ENCODE measurements at regions of chr4 and their contacts with region 1.

Region 1: DNA sequence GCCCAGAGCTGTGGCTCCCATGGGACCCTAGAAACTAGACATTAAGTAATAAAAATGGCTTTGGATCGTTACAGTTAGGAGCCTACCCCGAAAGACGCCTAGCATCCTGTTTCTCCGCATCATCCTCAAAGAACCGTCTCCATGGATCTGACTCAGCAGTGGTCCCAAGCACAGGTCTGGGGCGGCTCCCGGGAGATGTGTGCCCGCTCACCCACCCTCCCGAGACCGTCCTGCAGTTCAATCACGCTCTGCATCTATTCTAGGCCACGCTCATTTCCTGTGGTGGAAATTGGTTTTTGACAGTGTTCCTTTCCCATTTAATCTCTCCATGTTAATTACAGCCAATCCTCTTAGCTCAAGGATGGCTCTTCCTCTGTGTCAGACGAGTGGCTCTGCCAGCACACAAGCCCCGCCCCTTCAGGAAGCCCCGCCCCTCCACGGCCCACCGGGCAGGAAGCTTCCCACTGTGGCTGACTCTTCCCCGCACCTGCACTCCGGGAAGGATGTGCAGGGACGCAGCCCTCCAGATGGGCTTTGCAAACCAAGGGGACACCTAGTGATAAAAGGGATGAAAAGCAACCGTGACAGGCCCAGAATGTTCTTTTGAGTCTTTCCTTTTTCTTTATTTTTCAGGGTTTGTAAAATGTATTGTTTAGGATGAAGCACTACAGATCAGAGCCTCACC is 34.5 kb upstream of the HELT start:
- DNase-seq: peak; percentile 53 to 79
- ATAC-seq: peak; percentile 70 to 93 (median 86)
- H3K4me3 ChIP-seq: no peak overlapping the region
- H3K27ac ChIP-seq: no peak overlapping the region
- H3K4me1 ChIP-seq: peaks cover under 1% of the 10 kb centered on the region
- H3K27me3 ChIP-seq: no peaks in the 10 kb centered on the region
- CTCF ChIP-seq: peak; percentile 51

Region 2: GRCh38 chr4:184583738-184584502 is 399.9 kb before region 1 on chr4:
- intact Hi-C with region 1: no loop called
- DNase-seq: no peak
- ATAC-seq: no peak
- H3K4me3 ChIP-seq: no peak overlapping the region
- H3K27ac ChIP-seq: no peak overlapping the region
- H3K4me1 ChIP-seq: no peaks in the 10 kb centered on the region
- H3K27me3 ChIP-seq: no peaks in the 10 kb centered on the region
- CTCF ChIP-seq: no peak

Region 3: GRCh38 chr4:184815046-184815877 is 168.6 kb before region 1 on chr4:
- intact Hi-C with region 1: loop called in 1 of 2 experiments (anchors 5 kb)
- DNase-seq: peak; percentile 77 to 86
- ATAC-seq: peak; percentile 44 to 67 (median 51)
- H3K4me3 ChIP-seq: peak overlapping the region; percentile 47
- H3K27ac ChIP-seq: peak overlapping the region; percentile 92
- H3K4me1 ChIP-seq: peaks cover 70% of the 10 kb centered on the region
- H3K27me3 ChIP-seq: no peaks in the 10 kb centered on the region
- CTCF ChIP-seq: no peak

Region 4: GRCh38 chr4:184838249-184839074 is 145.4 kb before region 1 on chr4:
- intact Hi-C with region 1: loop called in 1 of 2 experiments (anchors 10 kb)
- DNase-seq: no peak
- ATAC-seq: no peak
- H3K4me3 ChIP-seq: no peak overlapping the region
- H3K27ac ChIP-seq: no peak overlapping the region
- H3K4me1 ChIP-seq: no peaks in the 10 kb centered on the region
- H3K27me3 ChIP-seq: no peaks in the 10 kb centered on the region
- CTCF ChIP-seq: no peak

Region 5: DNA sequence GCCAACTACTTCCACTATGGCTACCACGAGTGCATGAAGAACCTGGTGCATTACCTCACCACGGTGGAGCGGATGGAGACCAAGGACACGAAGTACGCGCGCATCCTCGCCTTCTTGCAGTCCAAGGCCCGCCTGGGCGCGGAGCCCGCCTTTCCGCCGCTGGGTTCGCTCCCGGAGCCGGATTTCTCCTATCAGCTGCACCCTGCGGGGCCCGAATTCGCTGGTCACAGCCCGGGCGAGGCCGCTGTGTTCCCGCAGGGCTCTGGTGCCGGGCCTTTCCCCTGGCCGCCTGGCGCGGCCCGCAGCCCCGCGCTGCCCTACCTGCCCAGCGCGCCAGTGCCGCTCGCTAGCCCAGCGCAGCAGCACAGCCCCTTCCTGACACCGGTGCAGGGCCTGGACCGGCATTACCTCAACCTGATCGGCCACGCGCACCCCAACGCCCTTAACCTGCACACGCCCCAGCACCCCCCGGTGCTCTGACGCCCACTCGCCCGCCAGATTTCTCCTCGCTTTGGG is 36.5 kb after region 1 on chr4:
- intact Hi-C with region 1: no loop called
- DNase-seq: no peak
- ATAC-seq: peak; percentile 29 to 68 (median 48)
- H3K4me3 ChIP-seq: peak overlapping the region; percentile 51
- H3K27ac ChIP-seq: no peak overlapping the region
- H3K4me1 ChIP-seq: peaks cover 36% of the 10 kb centered on the region
- H3K27me3 ChIP-seq: peaks cover 3 to 97% (median 45%) of the 10 kb centered on the region in 3 donors
- CTCF ChIP-seq: no peak

Measured in psoas muscle (tissue), 8 donors.